Heart right ventricle (tissue), 16 donors: ENCODE measurements at regions of chr1 and their contacts with region 1.

Region 1: GRCh38 chr1:234887016-234887900 is 241.4 kb downstream of the TOMM20 start:
- DNase-seq: peak in 1 of 2 donors; percentile 70
- ATAC-seq: peak; percentile 60 to 86 (median 82)
- H3K4me3 ChIP-seq: peak overlapping the region in 1 of 10 donors; percentile 7
- H3K27ac ChIP-seq: peak overlapping the region; percentile 87 to 99 (median 94)
- H3K4me1 ChIP-seq: peaks cover 7 to 49% (median 33%) of the 10 kb centered on the region in 9 donors
- H3K27me3 ChIP-seq: no peaks in the 10 kb centered on the region
- CTCF ChIP-seq: no peak

Region 2: DNA sequence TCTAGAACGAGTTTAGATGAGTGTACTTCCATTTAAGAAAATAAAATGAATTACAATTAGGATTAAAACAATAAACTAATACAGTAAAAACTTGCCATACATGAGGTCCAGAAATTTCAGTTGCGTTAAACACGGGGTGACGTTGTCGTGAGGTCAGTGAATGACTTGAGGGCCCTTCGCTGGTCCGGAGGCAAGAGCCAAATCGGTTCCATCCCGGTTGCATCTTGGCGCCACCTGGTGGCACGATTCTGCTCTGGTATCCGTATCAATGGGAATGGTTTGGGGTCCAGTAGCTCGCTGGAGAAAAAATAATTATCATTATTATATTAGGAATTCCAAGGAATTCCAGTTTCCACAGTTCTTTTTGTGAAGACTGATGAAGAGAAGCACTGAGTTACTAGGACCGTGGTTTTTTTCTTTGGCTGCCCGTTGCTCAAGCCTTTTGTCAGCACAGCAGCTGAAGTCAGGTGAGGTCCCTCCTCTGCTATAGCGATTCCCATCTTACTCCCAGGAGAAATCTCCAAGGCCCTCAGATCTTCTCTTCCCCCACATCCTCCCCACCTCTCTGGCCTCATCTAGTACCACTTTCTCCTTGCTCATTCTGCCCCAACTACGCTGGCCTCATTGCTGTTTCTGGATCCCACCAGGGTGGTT is 821.3 kb before region 1 on chr1:
- intact Hi-C with region 1: no loop called
- DNase-seq: peak; percentile 45 to 77
- ATAC-seq: peak in 2 of 8 donors; percentile 42 to 70
- H3K4me3 ChIP-seq: no peak overlapping the region
- H3K27ac ChIP-seq: no peak overlapping the region
- H3K4me1 ChIP-seq: no peaks in the 10 kb centered on the region
- H3K27me3 ChIP-seq: peaks cover 0 to 9% (median 3%) of the 10 kb centered on the region in 7 donors
- CTCF ChIP-seq: peak; percentile 35 to 83 (median 74)

Region 3: DNA sequence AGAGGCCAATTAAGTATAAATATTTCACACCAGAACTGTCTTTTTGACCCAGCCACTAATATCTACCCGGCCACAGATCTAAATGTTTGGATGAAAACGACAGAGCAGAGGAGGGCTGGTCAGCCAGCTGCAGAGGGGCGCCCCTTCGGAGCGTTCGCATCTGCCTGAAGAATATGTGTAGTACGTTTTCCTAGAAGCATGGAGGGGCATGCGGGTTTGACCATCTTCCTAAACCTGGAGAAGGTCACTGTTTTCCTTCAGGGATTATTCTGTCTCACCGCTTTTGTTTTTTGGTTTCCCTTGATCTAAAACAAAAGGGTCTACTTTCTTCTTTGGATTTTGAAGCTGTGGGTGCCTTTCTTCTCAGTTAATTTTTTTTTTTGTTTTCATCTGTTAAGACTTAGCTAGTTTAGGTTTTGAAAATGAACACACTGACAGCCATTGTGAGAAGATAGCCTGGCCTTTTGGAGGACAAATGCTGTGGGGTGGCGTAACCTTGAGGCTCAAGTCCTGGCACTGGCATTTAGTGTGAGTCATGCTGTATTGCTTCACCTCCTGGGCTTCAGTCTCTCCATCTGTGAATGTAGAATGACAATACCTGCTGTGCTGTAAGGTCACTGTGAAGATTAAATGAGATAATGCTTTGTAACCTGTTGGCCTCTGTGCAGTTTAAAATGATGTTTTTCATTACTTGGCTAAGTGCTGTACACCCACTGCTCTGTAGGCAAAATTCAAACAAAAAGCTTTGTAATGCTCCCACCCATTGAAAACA is 203.2 kb before region 1 on chr1:
- intact Hi-C with region 1: loop called in 1 of 10 experiments (anchors 5 kb)
- DNase-seq: peak in 1 of 2 donors; percentile 64
- ATAC-seq: peak; percentile 89 to 99 (median 94)
- H3K4me3 ChIP-seq: no peak overlapping the region
- H3K27ac ChIP-seq: peak overlapping the region in 9 of 10 donors; percentile 36 to 72 (median 65)
- H3K4me1 ChIP-seq: peaks cover 0 to 17% (median 8%) of the 10 kb centered on the region in 9 donors
- H3K27me3 ChIP-seq: no peaks in the 10 kb centered on the region
- CTCF ChIP-seq: no peak

Region 4: GRCh38 chr1:234862944-234863515 is 24.2 kb before region 1 on chr1:
- intact Hi-C with region 1: loop called in 1 of 10 experiments (anchors 2 kb)
- DNase-seq: peak; percentile 76 to 86
- ATAC-seq: peak; percentile 62 to 85 (median 76)
- H3K4me3 ChIP-seq: peak overlapping the region in 4 of 10 donors; percentile 4 to 17 (median 6)
- H3K27ac ChIP-seq: peak overlapping the region; percentile 60 to 93 (median 82)
- H3K4me1 ChIP-seq: peaks cover 6 to 51% (median 42%) of the 10 kb centered on the region in 9 donors
- H3K27me3 ChIP-seq: no peaks in the 10 kb centered on the region
- CTCF ChIP-seq: no peak

Region 5: GRCh38 chr1:234997201-234997895 is 110.1 kb after region 1 on chr1:
- intact Hi-C with region 1: loop called in 1 of 10 experiments (anchors 5 kb)
- DNase-seq: peak; percentile 97
- ATAC-seq: peak; percentile 91 to 98 (median 96)
- H3K4me3 ChIP-seq: peak overlapping the region in 5 of 10 donors; percentile 6 to 13 (median 12)
- H3K27ac ChIP-seq: peak overlapping the region; percentile 87 to 95 (median 92)
- H3K4me1 ChIP-seq: peaks cover 21 to 35% (median 30%) of the 10 kb centered on the region in 9 donors
- H3K27me3 ChIP-seq: no peaks in the 10 kb centered on the region
- CTCF ChIP-seq: no peak